Breast epithelium (tissue), 4 donors: ENCODE measurements at regions of chr22 and their contacts with region 1.

Region 1: GRCh38 chr22:31211862-31212730 is at the start of gene LIMK2:
- DNase-seq: peak; percentile 90 to 91
- H3K4me3 ChIP-seq: peak within 1 kb of the TSS; percentile 73 to 78 (median 73)
- H3K27ac ChIP-seq: peak within 1 kb of the TSS; percentile 79 to 82
- H3K4me1 ChIP-seq: peaks cover 8 to 9% of the 10 kb centered on the region in 2 donors
- H3K27me3 ChIP-seq: no peaks in the 10 kb centered on the region
- CTCF ChIP-seq: peak; percentile 26 to 67 (median 63)
- POLR2A ChIP-seq: peak; percentile 36
- total RNA-seq, gene LIMK2: 6.9 to 146 (median 135) TPM

Region 2: GRCh38 chr22:31227186-31227585 is 15.1 kb after region 1 on chr22:
- intact Hi-C with region 1: loop called (anchors 1 kb)
- DNase-seq: no peak
- H3K4me3 ChIP-seq: no peak overlapping the region
- H3K27ac ChIP-seq: no peak overlapping the region
- H3K4me1 ChIP-seq: peaks cover 0 to 6% of the 10 kb centered on the region in 2 donors
- H3K27me3 ChIP-seq: no peaks in the 10 kb centered on the region
- CTCF ChIP-seq: no peak
- POLR2A ChIP-seq: no peak

Region 3: GRCh38 chr22:31272522-31273446 is 60.7 kb after region 1 on chr22:
- intact Hi-C with region 1: loop called (anchors 10 kb)
- DNase-seq: no peak
- H3K4me3 ChIP-seq: no peak overlapping the region
- H3K27ac ChIP-seq: peak overlapping the region; percentile 72 to 75
- H3K4me1 ChIP-seq: peaks cover 0 to 5% of the 10 kb centered on the region in 2 donors
- H3K27me3 ChIP-seq: no peaks in the 10 kb centered on the region
- CTCF ChIP-seq: peak; percentile 36 to 83 (median 65)
- POLR2A ChIP-seq: no peak